Activated CD8-positive, alpha-beta T cell treated with anti-CD3 and anti-CD28 coated beads for 36 hours (primary cell): ENCODE measurements at regions of chr3 and their contacts with region 1.

Region 1: DNA sequence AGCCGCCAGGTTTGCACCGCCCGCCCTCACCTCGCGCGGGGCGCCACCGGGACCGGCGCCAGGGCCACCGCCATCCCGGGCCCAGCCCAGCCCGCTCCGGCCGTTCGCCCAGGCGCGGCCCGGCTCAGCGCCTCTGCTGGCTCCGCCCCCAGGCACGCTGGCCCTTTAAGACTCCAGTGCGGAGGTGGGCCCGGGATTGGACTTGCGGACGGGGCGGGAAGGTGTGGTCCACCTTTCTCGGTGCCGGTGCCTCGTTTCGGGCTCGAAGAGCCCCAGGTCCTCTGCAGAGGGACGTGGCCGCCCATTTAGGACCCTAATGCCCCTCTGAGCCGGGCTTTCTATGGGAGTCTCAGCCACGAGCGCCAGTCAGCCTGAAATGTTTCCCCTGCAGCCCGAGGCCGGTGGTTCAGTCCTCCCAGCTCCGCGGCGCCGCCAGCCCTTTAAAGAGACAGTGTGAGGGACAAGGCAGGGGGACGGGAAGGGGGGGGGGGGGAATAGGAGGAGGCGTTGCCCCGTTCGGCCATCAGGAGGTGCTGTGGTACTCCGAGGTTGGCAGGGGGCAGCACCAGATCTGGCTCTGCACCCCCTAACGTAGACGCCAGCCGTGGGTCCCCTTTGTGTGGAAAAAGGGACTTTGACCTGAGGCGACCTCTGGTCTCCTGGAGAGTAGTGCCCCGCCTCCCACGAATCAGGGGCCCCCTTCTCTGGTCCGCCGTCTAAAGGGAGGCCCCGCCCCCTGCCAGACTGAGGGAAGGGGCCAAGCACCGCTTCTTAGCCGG is 1.0 kb downstream of the HYAL2 start:
- DNase-seq: peak; percentile 89
- ATAC-seq: peak; percentile 73
- H3K4me3 Mint-ChIP-seq: peak overlapping the region; percentile 78
- H3K27ac Mint-ChIP-seq: peak overlapping the region; percentile 94
- H3K4me1 Mint-ChIP-seq: peaks cover 37% of the 10 kb centered on the region
- H3K27me3 Mint-ChIP-seq: no peaks in the 10 kb centered on the region
- CTCF ChIP-seq: peak; percentile 64

Region 2: DNA sequence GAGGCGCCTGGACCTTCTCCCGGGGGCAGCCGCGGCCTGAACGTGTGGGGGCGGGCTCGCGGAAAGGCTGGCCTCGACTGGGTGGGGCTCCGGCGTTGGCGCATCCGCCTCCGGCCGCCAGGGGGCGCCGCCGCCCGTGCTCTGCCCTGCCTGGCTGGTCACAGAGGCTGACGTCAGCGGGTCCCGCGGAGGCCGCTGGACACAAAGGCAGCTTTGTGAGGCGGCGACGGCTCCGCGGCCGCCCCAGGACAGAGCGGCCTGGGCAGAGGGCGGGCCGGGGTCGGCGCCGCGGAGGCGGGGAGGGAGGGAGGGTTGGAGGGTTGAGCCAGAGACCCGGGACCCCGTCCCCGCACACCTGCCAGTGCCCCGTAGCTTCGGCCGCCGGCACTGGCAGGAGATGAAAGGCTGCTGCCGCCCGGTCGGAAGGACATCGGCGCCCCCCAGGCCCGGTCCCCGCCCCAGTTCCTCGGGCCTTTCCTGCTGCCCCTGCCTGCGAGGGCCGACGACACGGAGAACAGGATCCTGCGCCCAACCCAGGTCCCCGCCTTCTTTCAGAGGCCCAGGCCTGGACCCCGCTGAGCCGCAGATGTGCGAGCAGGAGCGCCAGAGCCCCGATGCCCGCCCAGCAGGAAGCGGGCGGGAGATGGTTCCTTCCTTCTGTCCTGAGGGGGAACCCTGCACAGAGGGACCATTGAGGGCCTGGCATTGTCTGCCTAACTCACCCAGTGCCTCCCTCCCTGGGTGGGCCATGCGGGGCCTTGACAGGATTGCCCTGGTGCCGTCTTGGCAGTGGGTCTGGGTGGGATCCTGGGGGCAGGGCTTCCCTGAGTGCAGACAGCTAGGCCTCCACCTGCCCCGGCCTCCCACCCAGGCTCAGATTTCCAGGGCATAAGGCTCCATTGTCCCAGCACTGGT is 61.2 kb before region 1 on chr3:
- CTCF ChIA-PET with region 1: interaction called, 10 read pairs
- POLR2A ChIA-PET with region 1: no interaction called
- intact Hi-C with region 1: no loop called
- DNase-seq: peak; percentile 91
- ATAC-seq: peak; percentile 90
- H3K4me3 Mint-ChIP-seq: peak overlapping the region; percentile 61
- H3K27ac Mint-ChIP-seq: peak overlapping the region; percentile 78
- H3K4me1 Mint-ChIP-seq: peaks cover 4% of the 10 kb centered on the region
- H3K27me3 Mint-ChIP-seq: no peaks in the 10 kb centered on the region
- CTCF ChIP-seq: peak; percentile 99